ENCODE measurements at regions of chr6 and their contacts with region 1.

Region 1: DNA sequence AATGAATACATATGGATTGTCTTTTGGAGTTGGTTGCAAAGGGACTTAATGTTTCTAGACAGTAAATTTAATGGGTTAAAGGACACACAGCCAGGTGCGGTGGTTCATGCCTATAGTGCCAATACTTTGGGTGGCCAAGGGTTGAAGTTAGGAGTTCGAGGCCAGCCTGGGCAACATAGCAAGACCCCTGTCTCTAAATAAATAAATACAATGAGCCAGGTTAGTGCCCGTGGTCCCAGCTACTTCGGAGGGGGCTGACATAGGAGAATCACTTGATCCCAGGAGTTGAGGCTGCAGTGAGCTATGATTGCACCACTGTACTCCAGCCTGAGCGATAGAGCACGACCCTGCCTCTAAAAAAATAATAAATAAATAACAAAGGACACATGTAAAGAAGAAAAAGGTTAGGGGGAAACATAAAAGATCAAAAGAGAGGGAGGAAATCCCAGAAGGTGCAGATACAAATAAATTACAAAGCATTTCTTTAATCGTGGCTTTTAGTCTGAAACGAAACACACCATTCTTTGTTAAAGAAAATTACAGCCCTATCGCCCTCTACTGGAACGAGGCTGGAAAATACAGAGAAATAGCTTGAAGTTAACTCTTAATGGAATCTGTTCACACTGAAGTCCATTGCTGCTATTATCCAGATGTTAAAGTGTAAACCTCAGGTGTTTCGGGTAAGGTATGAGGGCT is 42.6 kb upstream of the SCML4 start:
- DNase-seq: peak; percentile 56
- H3K4me3 Mint-ChIP-seq: no peak overlapping the region
- H3K27ac Mint-ChIP-seq: no peak overlapping the region
- H3K4me1 Mint-ChIP-seq: peaks cover 35% of the 10 kb centered on the region
- H3K27me3 Mint-ChIP-seq: no peaks in the 10 kb centered on the region

Region 2: DNA sequence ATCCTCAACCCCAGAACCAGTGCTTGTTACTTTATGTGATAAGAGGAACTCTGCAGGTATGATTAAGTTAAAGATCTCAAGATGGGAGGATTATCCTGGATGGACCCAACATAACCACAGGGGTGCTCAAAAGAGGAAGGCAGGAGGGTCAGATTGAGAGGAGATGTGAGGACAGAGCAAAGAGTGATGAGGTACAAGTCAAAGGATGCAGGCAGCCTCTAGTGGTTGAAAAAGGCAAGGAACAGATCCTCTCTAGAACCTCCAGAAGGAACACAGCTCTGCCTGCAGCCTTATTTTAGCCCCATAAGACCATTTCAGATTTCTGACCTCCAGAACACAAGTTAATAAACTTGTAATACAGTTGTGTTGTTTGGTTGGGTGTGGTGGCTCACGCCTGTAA is 448.6 kb before region 1 on chr6:
- CTCF ChIA-PET with region 1: no interaction called
- intact Hi-C with region 1: no loop called
- DNase-seq: no peak
- H3K4me3 Mint-ChIP-seq: no peak overlapping the region
- H3K27ac Mint-ChIP-seq: no peak overlapping the region
- H3K4me1 Mint-ChIP-seq: peaks cover 4% of the 10 kb centered on the region
- H3K27me3 Mint-ChIP-seq: no peaks in the 10 kb centered on the region

Region 3: DNA sequence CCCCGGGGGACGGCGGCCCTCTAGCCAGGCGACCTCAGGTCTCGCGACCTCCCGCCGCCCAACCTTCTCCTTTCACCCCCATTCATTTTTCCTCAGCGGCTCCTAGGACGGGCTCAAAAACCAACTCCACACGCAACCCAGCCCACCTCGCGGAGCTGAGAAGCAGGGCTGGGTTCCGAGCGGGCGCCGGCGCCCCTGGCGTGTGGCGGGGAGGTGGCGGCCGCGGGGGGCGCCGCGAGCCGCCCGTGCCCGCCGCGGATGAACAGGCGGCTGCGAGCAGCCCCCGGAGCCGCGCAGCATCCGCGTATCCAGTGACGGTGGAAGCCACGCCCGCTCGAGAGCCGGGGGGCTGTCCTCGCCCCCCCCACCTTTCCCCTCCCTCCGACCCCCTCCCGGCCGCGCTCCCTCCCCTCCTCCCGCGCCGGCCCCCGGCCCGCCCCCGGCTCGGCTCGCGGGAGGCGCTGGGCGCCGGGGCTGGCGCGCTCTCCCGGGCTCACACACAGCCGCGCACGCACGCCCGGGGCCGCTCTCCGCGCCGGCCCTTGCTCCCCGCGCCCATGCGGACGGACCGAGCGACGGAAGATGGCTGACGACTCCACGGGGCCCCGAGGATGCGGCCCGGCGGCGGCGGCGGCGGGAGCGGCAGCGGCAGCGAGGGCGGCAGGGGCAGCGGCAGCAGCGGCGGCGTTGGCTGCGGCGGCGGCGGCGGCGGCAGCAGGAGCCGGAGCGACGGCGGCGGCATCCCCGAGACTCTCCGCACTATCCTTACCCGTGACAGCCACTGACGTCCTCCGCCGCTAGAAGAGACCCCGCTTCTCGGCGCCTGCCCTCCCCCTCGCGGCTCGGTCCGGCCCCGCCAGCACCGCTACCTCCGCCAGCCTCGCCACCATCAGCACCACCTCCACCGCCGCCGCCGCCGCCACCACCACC is 376.9 kb before region 1 on chr6 and contains the start of gene SOBP:
- CTCF ChIA-PET with region 1: no interaction called
- intact Hi-C with region 1: loop called (anchors 10 kb)
- DNase-seq: peak; percentile 28
- H3K4me3 Mint-ChIP-seq: peak within 1 kb of the TSS; percentile 80
- H3K27ac Mint-ChIP-seq: no peak within 1 kb of the TSS
- H3K4me1 Mint-ChIP-seq: peaks cover 12% of the 10 kb centered on the region
- H3K27me3 Mint-ChIP-seq: peaks cover 46% of the 10 kb centered on the region
- total RNA-seq, gene SOBP: 0.25 to 0.26 TPM

Region 4: DNA sequence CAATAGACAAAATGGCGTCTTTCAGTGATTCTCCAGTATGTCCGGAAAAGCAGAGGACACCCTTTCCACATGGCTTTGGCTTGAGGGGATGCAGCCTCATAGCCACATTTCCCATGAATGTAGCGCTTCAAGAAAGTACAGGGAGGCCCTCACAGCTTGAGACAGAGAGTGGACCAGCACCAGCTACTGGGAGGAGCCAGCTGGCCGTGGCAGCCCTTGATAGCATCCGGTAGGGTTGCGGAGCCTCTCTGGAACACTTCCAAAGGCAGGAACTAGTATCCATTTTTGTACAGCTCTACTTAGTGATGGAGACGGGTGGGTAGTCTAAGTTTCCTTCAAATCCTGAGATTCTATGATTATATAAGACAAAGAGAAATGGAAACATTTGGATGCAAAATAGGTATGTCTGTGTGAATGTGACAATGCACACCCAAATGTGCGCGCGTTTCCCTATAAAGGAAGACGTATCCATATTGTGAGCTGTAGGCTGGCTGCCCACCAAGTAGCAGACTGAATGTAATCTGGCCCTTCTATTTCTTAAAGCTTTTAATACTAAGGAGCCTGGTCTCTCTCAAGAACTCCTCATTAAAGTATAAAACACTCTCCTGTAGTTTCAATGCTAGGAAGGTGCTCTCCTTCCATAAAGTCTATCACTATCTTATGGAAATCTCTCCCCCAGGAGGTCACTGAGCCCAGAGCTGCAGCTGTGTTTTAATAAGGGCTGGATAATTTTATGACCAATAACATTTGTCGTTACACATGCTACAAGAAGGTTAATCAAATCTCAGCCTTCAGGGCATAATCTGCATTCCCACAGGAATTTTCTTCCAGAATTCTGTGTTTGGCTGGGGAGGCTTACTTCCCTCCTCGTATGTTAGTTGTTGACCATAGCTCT is 302.8 kb before region 1 on chr6:
- CTCF ChIA-PET with region 1: no interaction called
- intact Hi-C with region 1: no loop called
- DNase-seq: no peak
- H3K4me3 Mint-ChIP-seq: no peak overlapping the region
- H3K27ac Mint-ChIP-seq: no peak overlapping the region
- H3K4me1 Mint-ChIP-seq: no peaks in the 10 kb centered on the region
- H3K27me3 Mint-ChIP-seq: peaks cover 7% of the 10 kb centered on the region

Region 5: GRCh38 chr6:107800564-107801164 is 66.1 kb before region 1 on chr6:
- CTCF ChIA-PET with region 1: interaction called, 4 read pairs
- intact Hi-C with region 1: loop called (anchors 1 kb)
- DNase-seq: no peak
- H3K4me3 Mint-ChIP-seq: no peak overlapping the region
- H3K27ac Mint-ChIP-seq: peak overlapping the region; percentile 1
- H3K4me1 Mint-ChIP-seq: peaks cover 66% of the 10 kb centered on the region
- H3K27me3 Mint-ChIP-seq: no peaks in the 10 kb centered on the region